ENCODE measurements at regions of chr4 and their contacts with region 1.

Region 1: GRCh38 chr4:163544407-163545038 is 50.0 kb downstream of the TMA16 start:
- DNase-seq: peak; percentile 71
- ATAC-seq: peak; percentile 85
- H3K4me3 Mint-ChIP-seq: no peak overlapping the region
- H3K27ac Mint-ChIP-seq: no peak overlapping the region
- H3K4me1 Mint-ChIP-seq: peaks cover 8% of the 10 kb centered on the region
- H3K27me3 Mint-ChIP-seq: no peaks in the 10 kb centered on the region
- CTCF ChIP-seq: peak; percentile 92

Region 2: GRCh38 chr4:163484906-163485305 is 59.6 kb before region 1 on chr4:
- CTCF ChIA-PET with region 1: interaction called, 48 read pairs
- POLR2A ChIA-PET with region 1: no interaction called
- intact Hi-C with region 1: loop called (anchors 2 kb)
- DNase-seq: peak; percentile 77
- ATAC-seq: peak; percentile 71
- H3K4me3 Mint-ChIP-seq: no peak overlapping the region
- H3K27ac Mint-ChIP-seq: no peak overlapping the region
- H3K4me1 Mint-ChIP-seq: no peaks in the 10 kb centered on the region
- H3K27me3 Mint-ChIP-seq: peaks cover 7% of the 10 kb centered on the region
- CTCF ChIP-seq: peak; percentile 74

Region 3: DNA sequence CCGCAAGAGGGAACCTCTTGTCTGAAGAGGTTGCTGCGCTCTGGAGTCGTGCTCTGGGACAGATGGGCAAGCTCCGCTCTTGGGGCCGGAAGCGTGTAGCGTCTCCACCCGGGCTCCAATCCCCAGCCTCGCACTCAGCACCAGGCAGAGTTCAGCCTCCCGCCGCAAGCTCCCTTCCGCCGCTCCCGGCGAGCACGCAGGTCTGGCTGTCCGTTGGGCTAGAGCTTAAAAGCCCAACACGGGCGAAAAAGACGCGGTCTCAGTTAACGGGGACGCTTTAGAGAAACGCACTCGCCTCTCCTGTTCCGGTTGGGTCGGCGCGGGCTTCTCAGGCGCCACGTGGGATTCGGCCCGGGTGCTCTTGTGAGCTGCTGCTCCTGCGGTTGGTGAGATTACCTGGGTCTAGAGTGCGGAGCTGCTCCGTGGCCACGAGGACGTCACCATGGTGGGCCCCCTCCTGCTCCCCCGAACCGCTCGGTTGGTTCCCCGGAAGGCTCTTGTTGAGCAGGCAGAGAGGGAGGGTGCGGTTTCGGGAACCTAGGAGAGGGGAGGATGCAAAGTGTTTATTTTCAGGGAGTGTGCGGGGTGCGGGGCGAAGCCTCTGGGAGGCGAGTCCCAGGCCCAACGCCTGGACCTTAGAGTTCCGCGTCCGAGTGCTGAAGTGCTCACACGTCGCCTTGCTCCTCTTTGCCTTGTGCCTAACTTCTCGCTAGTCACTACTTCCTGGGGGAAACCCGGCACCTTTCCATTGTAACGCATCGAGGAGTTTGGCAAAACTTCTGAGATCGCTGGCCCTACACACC is 50.0 kb before region 1 on chr4 and contains the start of gene TMA16:
- CTCF ChIA-PET with region 1: interaction called, 16 read pairs
- POLR2A ChIA-PET with region 1: interaction called, 20 read pairs
- intact Hi-C with region 1: no loop called
- DNase-seq: peak; percentile 91
- ATAC-seq: peak; percentile 91
- H3K4me3 Mint-ChIP-seq: peak within 1 kb of the TSS; percentile 100
- H3K27ac Mint-ChIP-seq: peak within 1 kb of the TSS; percentile 99
- H3K4me1 Mint-ChIP-seq: peaks cover 26% of the 10 kb centered on the region
- H3K27me3 Mint-ChIP-seq: no peaks in the 10 kb centered on the region
- CTCF ChIP-seq: no peak
- total RNA-seq, gene TMA16: 53.5 to 58.4 TPM

Region 4: GRCh38 chr4:163505374-163505773 is 39.1 kb before region 1 on chr4:
- CTCF ChIA-PET with region 1: interaction called, 13 read pairs
- POLR2A ChIA-PET with region 1: no interaction called
- intact Hi-C with region 1: no loop called
- DNase-seq: no peak
- ATAC-seq: no peak
- H3K4me3 Mint-ChIP-seq: no peak overlapping the region
- H3K27ac Mint-ChIP-seq: no peak overlapping the region
- H3K4me1 Mint-ChIP-seq: peaks cover 34% of the 10 kb centered on the region
- H3K27me3 Mint-ChIP-seq: no peaks in the 10 kb centered on the region
- CTCF ChIP-seq: no peak

Region 5: GRCh38 chr4:163554870-163555465 is 10.4 kb after region 1 on chr4:
- CTCF ChIA-PET with region 1: interaction called, 11 read pairs
- POLR2A ChIA-PET with region 1: no interaction called
- intact Hi-C with region 1: no loop called
- DNase-seq: no peak
- ATAC-seq: no peak
- H3K4me3 Mint-ChIP-seq: no peak overlapping the region
- H3K27ac Mint-ChIP-seq: no peak overlapping the region
- H3K4me1 Mint-ChIP-seq: peaks cover 24% of the 10 kb centered on the region
- H3K27me3 Mint-ChIP-seq: no peaks in the 10 kb centered on the region
- CTCF ChIP-seq: peak; percentile 85

Region 6: DNA sequence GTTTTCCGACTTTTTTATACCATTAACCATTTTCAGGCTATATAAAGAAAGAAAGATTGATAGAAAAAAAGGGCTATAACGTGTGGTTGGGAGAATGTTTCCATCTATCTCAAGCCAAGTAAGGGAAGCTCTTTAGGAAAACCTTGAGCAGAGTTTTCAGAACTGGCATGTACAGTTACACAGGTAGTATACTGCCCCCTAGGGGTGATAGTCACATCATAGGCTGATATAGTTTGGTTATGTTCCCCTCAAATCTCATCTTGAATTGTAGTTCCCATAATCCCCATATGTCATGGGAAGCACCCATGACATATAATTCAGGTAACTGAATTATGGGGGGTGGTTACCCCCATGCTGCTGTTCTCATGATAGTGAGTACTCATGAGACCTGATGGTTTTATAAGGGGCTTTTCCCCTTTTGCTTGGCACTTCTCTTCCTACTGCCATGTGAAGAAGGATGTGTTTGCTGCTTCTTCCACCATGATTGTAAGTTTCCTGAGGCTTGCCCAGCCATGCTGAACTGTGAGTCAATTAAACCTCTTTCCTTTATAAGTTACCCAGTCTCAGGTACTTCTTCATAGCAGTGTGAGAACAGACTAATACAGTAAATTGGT is 136.8 kb after region 1 on chr4:
- CTCF ChIA-PET with region 1: interaction called, 250 read pairs
- POLR2A ChIA-PET with region 1: no interaction called
- intact Hi-C with region 1: no loop called
- DNase-seq: peak; percentile 24
- ATAC-seq: peak; percentile 45
- H3K4me3 Mint-ChIP-seq: no peak overlapping the region
- H3K27ac Mint-ChIP-seq: no peak overlapping the region
- H3K4me1 Mint-ChIP-seq: no peaks in the 10 kb centered on the region
- H3K27me3 Mint-ChIP-seq: peaks cover 3% of the 10 kb centered on the region
- CTCF ChIP-seq: peak; percentile 75

Region 7: DNA sequence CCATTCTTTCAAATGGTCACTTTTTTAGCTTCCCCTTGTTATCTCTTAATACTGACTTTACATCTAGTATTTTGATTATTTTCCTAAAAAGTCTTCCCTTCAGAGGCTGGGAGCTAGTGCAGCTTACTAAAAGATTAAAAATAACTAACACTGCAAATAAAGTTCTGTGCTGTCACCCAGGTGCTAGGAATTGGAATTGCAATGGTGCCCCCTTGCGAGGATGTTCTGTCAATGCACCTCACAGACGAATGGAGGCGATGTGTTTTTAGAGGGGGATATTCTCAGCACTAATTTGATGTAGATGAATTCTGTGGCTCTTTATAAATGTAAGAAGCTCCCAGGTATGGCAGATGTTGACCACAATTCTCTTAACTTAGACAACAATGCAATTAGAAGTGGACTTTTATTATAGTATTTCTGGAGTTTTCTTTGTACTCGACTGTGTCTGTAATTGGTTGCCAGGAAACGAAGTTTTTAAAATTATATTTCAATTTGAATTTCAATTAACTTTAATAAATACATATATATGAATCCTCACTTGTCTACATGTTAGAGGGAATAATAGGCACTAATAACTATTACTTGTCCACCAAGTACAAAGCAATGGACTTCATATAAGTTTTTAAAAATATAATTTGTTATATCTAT is 1187.4 kb after region 1 on chr4:
- CTCF ChIA-PET with region 1: interaction called, 13 read pairs
- POLR2A ChIA-PET with region 1: no interaction called
- intact Hi-C with region 1: no loop called
- DNase-seq: peak; percentile 59
- ATAC-seq: peak; percentile 74
- H3K4me3 Mint-ChIP-seq: no peak overlapping the region
- H3K27ac Mint-ChIP-seq: no peak overlapping the region
- H3K4me1 Mint-ChIP-seq: no peaks in the 10 kb centered on the region
- H3K27me3 Mint-ChIP-seq: peaks cover 6% of the 10 kb centered on the region
- CTCF ChIP-seq: peak; percentile 84

Measured in activated CD8-positive, alpha-beta T cell treated with anti-CD3 and anti-CD28 coated beads for 36 hours (primary cell).